ENCODE measurements at regions of chr11 and their contacts with region 1.

Region 1: DNA sequence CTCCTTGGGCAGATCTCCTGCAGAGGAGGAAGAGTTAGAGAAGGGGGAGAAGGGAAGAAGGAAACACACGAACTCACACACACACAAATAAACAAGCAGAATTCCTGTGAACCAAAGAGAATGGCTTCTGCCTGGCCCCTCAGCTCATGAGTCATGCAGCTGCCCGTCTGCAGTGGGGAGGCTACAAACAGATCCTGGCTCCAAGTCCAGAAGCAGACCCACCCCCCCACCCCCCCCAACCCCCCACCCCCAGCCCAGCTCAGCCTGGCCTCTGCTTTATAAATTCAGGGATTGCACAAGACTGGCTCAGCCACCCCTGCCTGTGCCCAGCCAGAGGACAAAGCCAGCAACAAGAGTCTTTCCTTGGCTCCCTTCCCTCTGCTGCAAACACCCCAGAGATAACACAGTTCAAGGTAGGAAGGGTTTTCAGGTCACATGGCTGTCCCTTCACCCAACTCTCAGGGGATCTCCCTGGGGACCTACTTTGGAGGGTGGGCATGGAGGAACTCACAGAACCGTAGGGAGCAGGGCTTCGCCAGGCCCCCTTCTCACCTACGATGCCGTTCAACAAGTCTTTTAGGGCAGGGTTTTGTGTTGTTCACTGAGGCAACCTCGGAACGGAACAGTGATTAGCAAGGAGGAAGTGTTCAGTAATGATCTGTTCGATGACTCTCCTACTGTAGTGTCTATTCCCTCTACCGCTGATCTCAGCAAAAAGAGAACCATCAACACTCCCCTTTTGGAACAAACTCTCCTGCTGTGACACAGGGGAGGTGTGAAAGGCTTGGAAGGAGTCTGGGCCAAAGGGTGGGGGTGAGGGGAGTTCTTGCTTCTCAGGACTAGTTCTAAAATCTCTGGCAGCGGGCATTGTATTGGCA is 35.5 kb downstream of the RPL27A start:
- DNase-seq: peak; percentile 15 to 61
- ATAC-seq: peak; percentile 41 to 58
- H3K4me3 ChIP-seq: peak overlapping the region in 1 of 4 donors; percentile 15
- H3K27ac ChIP-seq: peak overlapping the region; percentile 69 to 79 (median 76)
- H3K4me1 ChIP-seq: peaks cover 68 to 69% of the 10 kb centered on the region in 2 donors
- H3K27me3 ChIP-seq: no peaks in the 10 kb centered on the region
- CTCF ChIP-seq: no peak
- POLR2A ChIP-seq: no peak

Region 2: GRCh38 chr11:8682303-8683114 is 35.6 kb before region 1 on chr11 and contains the starts of genes RPL27A and TRIM66:
- in situ Hi-C with region 1: no loop called
- intact Hi-C with region 1: loop called (anchors 5 kb)
- DNase-seq: peak; percentile 97
- ATAC-seq: peak; percentile 97 to 98
- H3K4me3 ChIP-seq: peak within 1 kb of the TSS; percentile 70 to 100 (median 94)
- H3K27ac ChIP-seq: peak within 1 kb of the TSS; percentile 88 to 99 (median 98)
- H3K4me1 ChIP-seq: peaks cover 25 to 26% of the 10 kb centered on the region in 2 donors
- H3K27me3 ChIP-seq: no peaks in the 10 kb centered on the region
- CTCF ChIP-seq: peak in 3 of 5 experiments; percentile 25 to 31 (median 26)
- POLR2A ChIP-seq: peak; percentile 97 to 99
- total RNA-seq, gene RPL27A: 598 to 693 (median 633) TPM
- total RNA-seq, gene TRIM66: 0.55 to 6.5 (median 1.1) TPM